ENCODE measurements at regions of chr4 and their contacts with region 1.

Region 1: GRCh38 chr4:22897520-22898108 is 204.9 kb downstream of the GBA3 start:
- DNase-seq: no peak
- ATAC-seq: peak; percentile 76
- H3K4me3 ChIP-seq: no peak overlapping the region
- H3K27ac ChIP-seq: no peak overlapping the region
- H3K4me1 ChIP-seq: no peaks in the 10 kb centered on the region
- H3K27me3 ChIP-seq: no peaks in the 10 kb centered on the region; a peak in 1 of 4 replicates
- CTCF ChIP-seq: peak; percentile 63 to 70 (median 64)
- EP300 ChIP-seq: no peak
- POLR2A ChIP-seq: no peak
- RAD21 ChIP-seq: peak; percentile 60

Region 2: DNA sequence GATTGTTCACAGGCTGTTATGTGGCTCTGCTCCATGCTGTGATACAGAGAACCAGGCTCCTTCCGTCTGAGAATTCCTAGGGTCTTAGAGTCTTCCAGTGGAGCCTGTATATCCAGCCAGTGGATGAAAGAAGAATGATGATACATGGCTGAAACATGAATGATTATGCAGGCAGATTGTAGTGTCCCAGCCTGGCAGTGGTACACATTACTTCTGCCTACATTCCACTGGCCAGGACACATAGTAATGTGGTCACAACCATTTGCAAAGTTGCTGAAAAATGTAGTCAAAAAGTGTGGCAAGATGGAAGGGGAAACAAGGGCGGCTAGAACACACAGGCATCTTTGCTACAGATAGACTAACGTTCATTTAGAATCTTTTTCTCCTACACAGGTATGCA is 209.4 kb before region 1 on chr4:
- CTCF ChIA-PET with region 1: interaction called, 5 read pairs
- POLR2A ChIA-PET with region 1: no interaction called
- RAD21 ChIA-PET with region 1: interaction called, 3 read pairs
- SMC1A ChIA-PET with region 1: interaction called, 10 read pairs
- in situ Hi-C with region 1: no loop called
- intact Hi-C with region 1: no loop called
- DNase-seq: no peak
- ATAC-seq: no peak
- H3K4me3 ChIP-seq: no peak overlapping the region
- H3K27ac ChIP-seq: no peak overlapping the region
- H3K4me1 ChIP-seq: no peaks in the 10 kb centered on the region
- H3K27me3 ChIP-seq: no peaks in the 10 kb centered on the region
- CTCF ChIP-seq: no peak
- EP300 ChIP-seq: no peak
- POLR2A ChIP-seq: no peak
- RAD21 ChIP-seq: no peak

Region 3: DNA sequence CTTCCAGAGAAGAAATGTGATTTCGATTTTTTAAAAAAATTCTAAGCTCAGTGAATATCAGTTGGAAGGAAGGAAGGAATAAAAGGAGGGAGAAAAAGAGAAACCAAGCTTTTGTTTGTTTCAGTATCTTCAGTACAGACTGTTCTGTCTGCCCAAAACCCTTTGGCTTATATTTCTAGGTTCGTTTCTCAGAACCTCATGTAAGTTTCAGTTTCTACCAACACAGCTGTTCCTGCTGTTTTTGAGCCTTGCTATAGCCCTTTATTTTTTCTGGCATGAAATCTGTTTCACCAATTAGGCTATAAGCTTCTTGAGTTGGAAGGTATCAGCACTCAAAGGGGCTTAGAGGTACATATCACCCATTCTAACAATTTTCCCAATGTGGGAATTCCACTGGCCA is 47.0 kb before region 1 on chr4:
- CTCF ChIA-PET with region 1: interaction called, 14 read pairs
- POLR2A ChIA-PET with region 1: no interaction called
- RAD21 ChIA-PET with region 1: no interaction called
- SMC1A ChIA-PET with region 1: interaction called, 3 read pairs
- in situ Hi-C with region 1: no loop called
- intact Hi-C with region 1: no loop called
- DNase-seq: no peak
- ATAC-seq: peak; percentile 94
- H3K4me3 ChIP-seq: no peak overlapping the region
- H3K27ac ChIP-seq: no peak overlapping the region
- H3K4me1 ChIP-seq: no peaks in the 10 kb centered on the region
- H3K27me3 ChIP-seq: no peaks in the 10 kb centered on the region
- CTCF ChIP-seq: no peak
- EP300 ChIP-seq: no peak; a peak in 1 of 4 replicates
- POLR2A ChIP-seq: no peak
- RAD21 ChIP-seq: no peak

Region 4: GRCh38 chr4:22911285-22911684 is 13.7 kb after region 1 on chr4:
- CTCF ChIA-PET with region 1: interaction called, 35 read pairs
- POLR2A ChIA-PET with region 1: no interaction called
- RAD21 ChIA-PET with region 1: no interaction called
- SMC1A ChIA-PET with region 1: interaction called, 4 read pairs
- in situ Hi-C with region 1: no loop called
- intact Hi-C with region 1: no loop called
- DNase-seq: no peak
- ATAC-seq: peak; percentile 83
- H3K4me3 ChIP-seq: no peak overlapping the region
- H3K27ac ChIP-seq: no peak overlapping the region
- H3K4me1 ChIP-seq: no peaks in the 10 kb centered on the region
- H3K27me3 ChIP-seq: no peaks in the 10 kb centered on the region
- CTCF ChIP-seq: no peak
- EP300 ChIP-seq: no peak
- POLR2A ChIP-seq: no peak
- RAD21 ChIP-seq: no peak

Region 5: GRCh38 chr4:23105759-23106370 is 208.3 kb after region 1 on chr4:
- CTCF ChIA-PET with region 1: interaction called, 12 read pairs
- POLR2A ChIA-PET with region 1: no interaction called
- RAD21 ChIA-PET with region 1: interaction called, 3 read pairs
- SMC1A ChIA-PET with region 1: interaction called, 3 read pairs
- in situ Hi-C with region 1: no loop called
- intact Hi-C with region 1: no loop called
- DNase-seq: no peak
- ATAC-seq: no peak
- H3K4me3 ChIP-seq: no peak overlapping the region
- H3K27ac ChIP-seq: no peak overlapping the region
- H3K4me1 ChIP-seq: no peaks in the 10 kb centered on the region
- H3K27me3 ChIP-seq: no peaks in the 10 kb centered on the region
- CTCF ChIP-seq: no peak
- EP300 ChIP-seq: no peak
- POLR2A ChIP-seq: no peak
- RAD21 ChIP-seq: no peak

Region 6: GRCh38 chr4:23135792-23136645 is 238.4 kb after region 1 on chr4:
- CTCF ChIA-PET with region 1: interaction called, 14 read pairs
- POLR2A ChIA-PET with region 1: no interaction called
- RAD21 ChIA-PET with region 1: interaction called, 18 read pairs
- SMC1A ChIA-PET with region 1: interaction called, 10 read pairs
- in situ Hi-C with region 1: no loop called
- intact Hi-C with region 1: loop called (anchors 10 kb)
- DNase-seq: no peak
- ATAC-seq: peak; percentile 79
- H3K4me3 ChIP-seq: no peak overlapping the region
- H3K27ac ChIP-seq: no peak overlapping the region
- H3K4me1 ChIP-seq: no peaks in the 10 kb centered on the region
- H3K27me3 ChIP-seq: no peaks in the 10 kb centered on the region; a peak in 1 of 4 replicates
- CTCF ChIP-seq: peak; percentile 64 to 80 (median 65)
- EP300 ChIP-seq: no peak
- POLR2A ChIP-seq: no peak
- RAD21 ChIP-seq: peak; percentile 68

Region 7: GRCh38 chr4:24419181-24420034 is 1521.8 kb after region 1 on chr4:
- CTCF ChIA-PET with region 1: interaction called, 27 read pairs
- POLR2A ChIA-PET with region 1: no interaction called
- RAD21 ChIA-PET with region 1: interaction called, 6 read pairs
- SMC1A ChIA-PET with region 1: interaction called, 6 read pairs
- in situ Hi-C with region 1: loop called (anchors 10 kb)
- intact Hi-C with region 1: loop called (anchors 2 kb)
- DNase-seq: peak; percentile 12
- ATAC-seq: peak; percentile 93
- H3K4me3 ChIP-seq: no peak overlapping the region
- H3K27ac ChIP-seq: no peak overlapping the region
- H3K4me1 ChIP-seq: no peaks in the 10 kb centered on the region
- H3K27me3 ChIP-seq: no peaks in the 10 kb centered on the region; a peak in 1 of 4 replicates
- CTCF ChIP-seq: peak; percentile 90 to 98 (median 92)
- EP300 ChIP-seq: no peak
- POLR2A ChIP-seq: no peak
- RAD21 ChIP-seq: peak; percentile 95